GM10248 (cell line): ENCODE measurements at regions of chr2 and their contacts with region 1.

Region 1: GRCh38 chr2:216139884-216140283 is 30.7 kb downstream of the XRCC5 start:
- DNase-seq: peak; percentile 18
- CTCF ChIP-seq: peak; percentile 41

Region 2: GRCh38 chr2:216121255-216121654 is 18.6 kb before region 1 on chr2:
- CTCF ChIA-PET with region 1: interaction called, 23 read pairs
- POLR2A ChIA-PET with region 1: interaction called, 6 read pairs
- DNase-seq: no peak
- CTCF ChIP-seq: no peak

Region 3: DNA sequence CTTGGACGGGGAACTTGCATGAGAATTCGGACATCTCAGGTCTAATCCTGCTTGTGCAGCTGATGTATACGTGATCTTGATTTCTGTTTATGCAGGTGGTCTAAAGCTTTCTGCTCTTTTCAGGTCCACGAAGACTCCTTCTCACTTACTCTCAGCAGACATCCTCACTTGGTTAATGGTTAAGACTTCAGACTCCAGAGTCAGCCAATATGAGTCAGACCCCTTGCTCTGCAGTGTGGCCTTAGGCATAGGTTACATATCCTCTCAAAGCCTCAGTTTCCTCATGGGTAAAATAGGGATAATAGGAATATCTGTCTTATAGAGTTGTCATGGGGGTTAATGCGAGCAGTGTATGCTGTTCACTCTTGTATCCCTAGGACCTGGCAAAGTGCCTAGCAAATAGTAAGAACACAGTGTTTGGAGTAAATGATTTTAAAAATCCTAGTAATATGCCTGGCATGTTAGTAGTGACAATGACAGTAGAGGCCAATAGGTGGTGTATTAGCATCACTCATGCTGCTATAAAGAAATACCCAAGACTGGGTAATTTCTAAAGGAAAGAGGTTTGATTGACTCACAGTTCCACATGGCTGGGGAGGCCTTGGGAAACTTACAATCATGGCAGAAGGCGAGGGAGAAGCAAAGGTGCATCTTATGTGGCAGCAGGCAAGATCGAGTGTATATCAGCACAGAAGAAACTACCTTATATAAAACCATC is 11.6 kb after region 1 on chr2:
- CTCF ChIA-PET with region 1: interaction called, 17 read pairs
- POLR2A ChIA-PET with region 1: no interaction called
- DNase-seq: no peak
- CTCF ChIP-seq: no peak

Region 4: DNA sequence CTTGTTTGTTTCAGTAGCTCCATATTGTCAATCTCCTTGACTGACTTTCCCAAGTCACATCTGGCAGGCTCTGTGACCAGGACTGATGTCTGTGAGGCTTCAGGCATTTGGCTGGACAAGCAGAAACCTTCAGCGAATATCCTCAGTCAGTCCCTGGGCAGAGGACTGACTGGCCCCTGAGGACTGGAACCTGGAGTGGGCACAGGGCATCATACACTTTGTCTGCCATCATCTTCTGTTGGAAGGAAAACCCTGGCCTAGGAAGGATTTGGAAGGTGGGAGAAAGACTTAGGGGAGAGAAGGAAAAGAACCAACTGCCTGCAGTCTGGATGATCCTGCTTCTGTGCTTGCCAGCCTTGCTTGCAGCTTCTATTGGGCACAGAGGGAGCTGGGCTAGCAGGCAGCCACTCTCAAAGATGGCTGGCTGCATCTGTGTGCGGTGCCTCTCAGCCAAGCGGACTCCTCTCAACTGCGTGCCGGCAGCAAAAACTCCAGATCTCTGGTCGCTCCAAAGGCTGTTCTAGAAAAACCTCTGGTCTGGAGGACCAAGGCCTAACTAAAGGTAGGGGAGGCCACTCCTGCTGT is 105.6 kb after region 1 on chr2:
- CTCF ChIA-PET with region 1: no interaction called
- POLR2A ChIA-PET with region 1: no interaction called
- DNase-seq: no peak
- CTCF ChIP-seq: no peak